Common myeloid progenitor, CD34-positive (primary cell): ENCODE measurements at regions of chr19 and their contacts with region 1.

Region 1: GRCh38 chr19:4851551-4852290 is 15.7 kb downstream of the PLIN3 start:
- DNase-seq: peak; percentile 55 to 75 (median 65)
- H3K4me3 ChIP-seq: no peak overlapping the region
- H3K27ac ChIP-seq: no peak overlapping the region
- H3K4me1 ChIP-seq: no peaks in the 10 kb centered on the region
- H3K27me3 ChIP-seq: no peaks in the 10 kb centered on the region

Region 2: DNA sequence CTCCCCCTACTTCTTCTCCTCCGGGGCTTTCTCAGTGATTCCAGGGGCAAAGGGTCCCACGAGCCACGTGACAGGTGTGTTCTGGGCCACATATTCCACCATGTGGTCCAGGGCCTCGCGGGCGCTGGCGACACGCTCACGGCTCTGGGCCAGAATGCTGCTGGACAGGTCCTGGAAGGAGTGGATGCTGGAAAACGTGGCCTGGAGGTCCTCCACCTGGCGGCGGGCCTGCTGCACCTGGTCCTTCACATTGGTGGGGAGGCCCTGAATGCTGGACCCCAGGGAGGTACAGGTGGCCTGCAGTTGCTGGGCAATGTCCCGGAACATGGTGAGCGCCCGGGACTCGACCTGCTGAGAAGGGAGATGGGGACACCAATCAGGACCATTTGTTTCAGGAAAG is 12.5 kb before region 1 on chr19:
- CTCF ChIA-PET with region 1: interaction called, 16 read pairs
- POLR2A ChIA-PET with region 1: no interaction called
- DNase-seq: no peak
- H3K4me3 ChIP-seq: no peak overlapping the region
- H3K27ac ChIP-seq: no peak overlapping the region
- H3K4me1 ChIP-seq: peaks cover 0 to 9% (median 4%) of the 10 kb centered on the region in 4 experiments
- H3K27me3 ChIP-seq: no peaks in the 10 kb centered on the region

Region 3: GRCh38 chr19:4889034-4889815 is 37.5 kb after region 1 on chr19:
- CTCF ChIA-PET with region 1: no interaction called
- POLR2A ChIA-PET with region 1: no interaction called
- DNase-seq: no peak
- H3K4me3 ChIP-seq: no peak overlapping the region
- H3K27ac ChIP-seq: no peak overlapping the region
- H3K4me1 ChIP-seq: no peaks in the 10 kb centered on the region
- H3K27me3 ChIP-seq: no peaks in the 10 kb centered on the region

Region 4: DNA sequence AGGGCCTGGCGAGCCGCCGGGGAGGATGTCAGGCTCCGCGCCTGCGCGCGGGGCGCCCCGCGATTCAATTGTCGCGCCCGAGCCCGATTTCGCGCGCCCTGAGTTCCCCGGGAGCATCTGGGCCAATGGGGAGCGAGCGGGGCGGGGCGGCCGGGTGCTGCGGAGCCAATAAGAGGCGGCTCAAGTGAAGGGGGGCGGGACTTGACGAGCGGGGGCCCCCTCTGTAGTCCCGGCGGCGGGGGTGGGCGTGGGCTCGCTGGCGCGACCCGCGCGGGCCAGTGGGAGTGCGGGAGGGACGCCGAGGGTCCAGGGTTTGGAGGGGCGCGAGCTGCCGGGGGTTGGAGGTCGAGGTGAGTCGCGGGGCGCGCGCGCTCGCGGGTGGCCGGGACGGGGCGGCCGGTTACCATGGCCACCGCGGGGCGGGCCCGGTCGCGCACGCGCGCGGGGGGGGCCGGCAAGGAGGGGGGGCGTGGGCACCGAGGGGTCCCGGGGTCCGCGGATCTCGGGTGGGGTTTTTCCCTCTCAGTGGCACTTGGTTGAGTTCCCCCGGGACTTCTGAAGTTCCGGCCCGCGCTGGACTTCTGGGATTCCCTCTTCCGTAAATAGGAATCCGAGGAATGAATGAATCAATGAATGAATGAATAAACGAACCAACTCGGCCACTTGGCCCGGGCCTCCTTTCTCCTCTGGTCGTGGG is 58.3 kb after region 1 on chr19:
- CTCF ChIA-PET with region 1: interaction called, 11 read pairs
- POLR2A ChIA-PET with region 1: no interaction called
- DNase-seq: peak; percentile 86 to 93 (median 91)
- H3K4me3 ChIP-seq: peak overlapping the region; percentile 33 to 85 (median 71)
- H3K27ac ChIP-seq: no peak overlapping the region
- H3K4me1 ChIP-seq: peaks cover 14 to 56% (median 46%) of the 10 kb centered on the region in 4 experiments
- H3K27me3 ChIP-seq: no peaks in the 10 kb centered on the region